PC-9 (cell line): ENCODE measurements at regions of chr4 and their contacts with region 1.

Region 1: DNA sequence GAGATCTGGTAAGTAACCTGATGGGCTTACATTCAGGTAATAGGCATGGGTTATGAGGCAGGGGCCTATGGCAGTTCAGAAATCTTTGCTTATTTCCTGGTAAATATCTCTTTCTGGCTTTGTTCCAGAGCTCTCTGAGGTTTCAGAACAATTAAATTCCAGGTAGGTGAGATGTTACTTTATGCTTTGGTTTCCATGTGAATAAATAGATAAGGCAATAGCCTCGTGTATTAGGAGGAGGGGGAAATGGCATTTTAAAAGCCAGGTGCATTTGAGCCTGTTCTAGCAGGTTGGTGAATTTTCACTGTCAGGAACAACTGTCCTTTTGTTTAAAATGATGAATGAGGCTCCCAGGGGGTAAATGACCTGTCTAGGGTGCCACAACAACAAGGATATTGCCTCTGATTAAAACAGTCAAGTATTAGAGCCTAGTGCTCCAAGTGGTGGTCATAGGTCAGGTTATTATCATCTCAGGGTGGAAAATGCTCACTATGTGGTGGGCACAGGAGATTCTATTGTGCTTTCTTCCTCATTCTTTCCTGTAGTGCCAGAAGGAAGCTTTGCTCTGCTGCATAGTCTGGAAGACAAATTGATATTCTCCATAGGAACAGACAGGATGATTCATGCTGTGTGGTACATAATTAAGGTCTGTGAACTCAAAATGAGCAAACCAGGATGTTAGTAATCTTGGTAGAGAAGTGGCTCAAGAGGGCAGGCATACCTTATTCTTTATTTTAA is 296.2 kb downstream of the INPP4B start:
- DNase-seq: peak; percentile 67 to 98
- H3K4me3 ChIP-seq: no peak overlapping the region
- H3K27ac ChIP-seq: peak overlapping the region; percentile 99
- H3K4me1 ChIP-seq: peaks cover 48% of the 10 kb centered on the region
- H3K27me3 ChIP-seq: no peaks in the 10 kb centered on the region
- CTCF ChIP-seq: no peak

Region 2: GRCh38 chr4:142126890-142127497 is 422.9 kb before region 1 on chr4:
- CTCF ChIA-PET with region 1: no interaction called
- POLR2A ChIA-PET with region 1: no interaction called
- intact Hi-C with region 1: loop called (anchors 5 kb)
- DNase-seq: peak; percentile 38 to 46
- H3K4me3 ChIP-seq: no peak overlapping the region
- H3K27ac ChIP-seq: no peak overlapping the region
- H3K4me1 ChIP-seq: no peaks in the 10 kb centered on the region
- H3K27me3 ChIP-seq: no peaks in the 10 kb centered on the region
- CTCF ChIP-seq: peak; percentile 89

Region 3: DNA sequence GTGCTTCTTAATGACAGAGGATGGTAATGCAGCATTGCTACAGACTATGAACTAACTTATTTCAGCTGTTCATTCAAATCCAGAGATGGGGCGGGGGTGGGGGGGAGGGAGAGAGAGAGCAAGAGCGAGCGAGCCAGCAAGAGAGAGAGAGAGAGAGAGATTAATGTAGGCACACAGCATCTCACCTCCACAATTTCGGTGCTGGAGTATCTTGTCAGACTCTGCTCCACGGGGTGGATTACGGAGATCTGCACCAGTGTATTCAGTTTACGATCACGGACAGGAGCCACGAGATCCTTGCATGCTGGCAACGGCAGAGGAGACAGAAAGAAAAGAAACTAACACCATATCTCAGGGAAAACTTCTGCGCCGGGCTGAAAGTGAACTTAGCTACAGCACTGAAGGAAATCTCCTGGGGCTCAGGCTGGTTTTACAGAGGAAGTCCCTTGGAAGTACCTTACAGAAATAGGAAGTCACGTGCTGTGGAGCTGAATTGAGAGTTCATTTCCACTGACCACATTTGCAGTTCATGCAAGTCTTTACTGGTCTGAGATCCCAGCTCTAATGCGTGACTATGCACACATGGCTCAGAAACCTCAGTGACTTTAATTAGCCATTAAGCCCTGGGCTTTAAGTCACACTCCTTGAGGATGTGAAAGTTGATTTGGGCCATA is 144.7 kb before region 1 on chr4:
- CTCF ChIA-PET with region 1: no interaction called
- POLR2A ChIA-PET with region 1: no interaction called
- intact Hi-C with region 1: loop called (anchors 1 kb)
- DNase-seq: no peak
- H3K4me3 ChIP-seq: no peak overlapping the region
- H3K27ac ChIP-seq: peak overlapping the region; percentile 100
- H3K4me1 ChIP-seq: peaks cover 68% of the 10 kb centered on the region
- H3K27me3 ChIP-seq: no peaks in the 10 kb centered on the region
- CTCF ChIP-seq: no peak

Region 4: DNA sequence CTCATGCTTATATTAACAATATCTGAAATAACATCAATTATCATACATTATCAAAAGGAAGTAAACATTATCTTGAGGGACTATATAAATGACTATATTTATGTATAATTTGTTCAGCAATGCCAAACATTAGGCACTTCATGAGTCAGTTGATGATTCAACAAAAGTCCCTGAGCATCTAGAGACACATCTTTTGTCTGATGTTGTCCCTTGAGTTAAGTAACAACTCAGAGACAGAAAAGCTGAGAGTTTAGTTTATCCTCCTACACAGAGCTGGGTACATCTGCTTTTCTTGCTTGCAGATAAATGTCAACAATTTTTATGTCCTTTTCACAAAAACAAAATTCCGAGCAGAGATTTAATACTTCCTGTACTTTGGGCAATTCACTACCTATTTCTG is 14.9 kb before region 1 on chr4:
- CTCF ChIA-PET with region 1: no interaction called
- POLR2A ChIA-PET with region 1: no interaction called
- intact Hi-C with region 1: no loop called
- DNase-seq: peak in 1 of 2 experiments; percentile 44
- H3K4me3 ChIP-seq: no peak overlapping the region
- H3K27ac ChIP-seq: no peak overlapping the region
- H3K4me1 ChIP-seq: peaks cover 8% of the 10 kb centered on the region
- H3K27me3 ChIP-seq: no peaks in the 10 kb centered on the region
- CTCF ChIP-seq: no peak

Region 5: DNA sequence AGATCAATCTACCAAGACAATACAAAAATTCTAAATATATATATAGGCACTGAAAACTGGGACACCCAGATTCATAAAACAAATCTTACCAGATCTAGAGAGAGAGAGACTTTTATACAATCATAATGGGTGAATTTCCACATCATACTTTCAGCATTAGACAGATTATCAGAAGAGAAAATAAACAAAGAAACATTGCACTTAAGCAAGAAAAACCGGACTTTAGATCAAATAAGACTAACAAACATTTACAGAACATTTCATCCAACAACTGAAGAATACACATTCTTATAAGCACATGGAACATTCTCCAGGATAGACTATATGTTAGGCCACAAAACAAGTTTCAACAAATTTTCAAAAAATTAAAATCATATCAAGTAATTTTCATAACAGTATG is 51.1 kb after region 1 on chr4:
- CTCF ChIA-PET with region 1: no interaction called
- POLR2A ChIA-PET with region 1: no interaction called
- intact Hi-C with region 1: loop called (anchors 2 kb)
- DNase-seq: peak in 1 of 2 experiments; percentile 74
- H3K4me3 ChIP-seq: peak overlapping the region; percentile 3; the same call in 1 of the 2 replicates
- H3K27ac ChIP-seq: peak overlapping the region; percentile 58
- H3K4me1 ChIP-seq: peaks cover 19% of the 10 kb centered on the region
- H3K27me3 ChIP-seq: no peaks in the 10 kb centered on the region
- CTCF ChIP-seq: no peak

Region 6: DNA sequence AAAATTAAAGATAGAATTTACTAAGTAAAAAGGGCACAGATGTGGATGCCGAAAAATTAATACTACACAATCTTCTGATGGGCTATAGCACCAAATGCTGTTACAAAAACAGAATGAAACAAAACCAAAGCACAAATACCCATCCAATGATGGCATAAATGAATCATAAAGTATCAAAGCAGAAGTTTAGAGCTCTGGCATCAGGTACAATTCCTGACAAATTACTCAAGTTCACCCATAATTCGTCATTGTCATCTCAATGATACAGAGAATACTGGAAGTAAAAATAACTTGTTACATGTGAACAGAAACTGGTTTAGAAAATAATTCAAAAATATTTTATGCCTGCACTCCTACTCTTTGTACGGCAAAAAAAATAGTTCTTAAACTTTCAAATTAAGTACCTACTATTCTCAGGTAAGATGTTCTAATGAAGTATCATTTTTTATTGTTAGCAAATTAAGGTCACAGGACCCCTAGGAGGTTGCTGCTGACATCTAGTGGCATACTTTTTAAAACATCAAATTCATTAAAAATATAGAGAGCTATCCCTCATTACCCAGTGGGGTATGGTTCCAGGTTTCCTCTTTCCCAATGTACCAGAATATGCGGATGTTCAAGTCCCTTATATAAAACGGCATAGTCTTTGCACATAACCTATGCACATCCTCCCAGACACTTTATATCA is 170.1 kb after region 1 on chr4:
- CTCF ChIA-PET with region 1: interaction called, 4 read pairs
- POLR2A ChIA-PET with region 1: no interaction called
- intact Hi-C with region 1: loop called (anchors 1 kb)
- DNase-seq: peak in 1 of 2 experiments; percentile 65
- H3K4me3 ChIP-seq: no peak overlapping the region
- H3K27ac ChIP-seq: peak overlapping the region; percentile 64
- H3K4me1 ChIP-seq: peaks cover 16% of the 10 kb centered on the region
- H3K27me3 ChIP-seq: no peaks in the 10 kb centered on the region
- CTCF ChIP-seq: peak; percentile 63